H1 (cell line): ENCODE measurements at regions of chr4 and their contacts with region 1.

Region 1: GRCh38 chr4:78644744-78645330 is 93.3 kb downstream of the ANXA3 start:
- DNase-seq: no peak
- H3K4me3 ChIP-seq: no peak overlapping the region
- H3K27ac ChIP-seq: no peak overlapping the region
- H3K4me1 ChIP-seq: no peaks in the 10 kb centered on the region
- H3K27me3 ChIP-seq: no peaks in the 10 kb centered on the region
- CTCF ChIP-seq: peak; percentile 54 to 81 (median 74); a peak in 3 of 4 replicates
- EP300 ChIP-seq: no peak
- POLR2A ChIP-seq: no peak
- RAD21 ChIP-seq: peak; percentile 66 to 74

Region 2: DNA sequence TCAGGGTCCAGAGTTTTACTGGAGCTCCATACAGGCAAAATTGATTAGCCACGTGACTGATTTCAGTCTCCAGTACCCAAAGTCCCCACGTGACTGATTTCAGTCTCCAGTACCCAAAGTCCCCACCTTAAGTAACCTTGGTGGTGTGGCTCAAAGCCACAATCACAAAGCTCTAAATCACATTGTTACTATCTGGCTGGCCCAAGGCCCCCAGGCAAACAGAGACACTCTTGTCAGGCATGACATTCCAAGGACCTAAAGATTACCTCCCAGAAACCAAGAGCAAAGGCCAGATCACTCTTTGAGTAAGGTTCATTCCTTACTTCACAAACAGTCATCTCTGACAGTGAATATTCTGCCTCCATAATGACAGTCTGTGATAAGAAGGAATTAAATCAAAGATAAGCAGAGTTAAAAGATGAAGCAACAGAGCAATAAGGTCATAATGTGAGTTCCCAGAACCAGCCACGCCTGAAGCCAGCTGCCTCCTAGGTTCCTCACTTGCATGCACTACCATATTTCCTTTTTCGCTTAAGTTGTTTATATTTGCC is 14.8 kb before region 1 on chr4:
- CTCF ChIA-PET with region 1: interaction called, 38 read pairs
- POLR2A ChIA-PET with region 1: no interaction called
- DNase-seq: no peak
- H3K4me3 ChIP-seq: no peak overlapping the region
- H3K27ac ChIP-seq: no peak overlapping the region
- H3K4me1 ChIP-seq: no peaks in the 10 kb centered on the region
- H3K27me3 ChIP-seq: no peaks in the 10 kb centered on the region
- CTCF ChIP-seq: no peak
- EP300 ChIP-seq: no peak
- POLR2A ChIP-seq: no peak
- RAD21 ChIP-seq: no peak

Region 3: GRCh38 chr4:78659264-78659663 is 14.4 kb after region 1 on chr4:
- CTCF ChIA-PET with region 1: interaction called, 16 read pairs
- POLR2A ChIA-PET with region 1: no interaction called
- DNase-seq: no peak
- H3K4me3 ChIP-seq: no peak overlapping the region
- H3K27ac ChIP-seq: no peak overlapping the region
- H3K4me1 ChIP-seq: peaks cover under 1 to 11% (median 2%) of the 10 kb centered on the region in 4 experiments; a peak in 3 of 7 replicates
- H3K27me3 ChIP-seq: no peaks in the 10 kb centered on the region; a peak in 1 of 7 replicates
- CTCF ChIP-seq: no peak
- EP300 ChIP-seq: no peak
- POLR2A ChIP-seq: no peak
- RAD21 ChIP-seq: no peak

Region 4: DNA sequence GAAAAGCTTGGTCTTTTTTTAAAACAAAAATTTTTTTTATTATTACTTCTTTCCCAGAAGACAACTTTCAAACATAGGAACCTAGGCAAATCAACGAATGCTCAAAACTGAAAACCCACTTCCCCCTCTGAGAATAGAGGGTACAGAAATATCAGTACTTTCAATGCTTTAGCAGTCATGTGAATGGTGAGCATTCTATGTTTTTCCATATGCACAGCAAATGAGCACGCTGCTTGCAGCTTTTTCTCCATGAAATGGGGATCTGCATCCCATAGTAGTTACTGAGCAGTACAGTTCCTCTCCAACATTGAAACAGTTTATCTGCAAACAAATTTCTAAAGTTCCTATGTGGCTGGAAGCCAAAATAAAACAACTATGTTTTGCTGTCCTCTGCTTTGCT is 22.9 kb after region 1 on chr4:
- CTCF ChIA-PET with region 1: interaction called, 50 read pairs
- POLR2A ChIA-PET with region 1: no interaction called
- DNase-seq: no peak
- H3K4me3 ChIP-seq: no peak overlapping the region
- H3K27ac ChIP-seq: no peak overlapping the region
- H3K4me1 ChIP-seq: peaks cover 0 to 9% (median 2%) of the 10 kb centered on the region in 4 experiments; a peak in 1 of 7 replicates
- H3K27me3 ChIP-seq: no peaks in the 10 kb centered on the region
- CTCF ChIP-seq: no peak
- EP300 ChIP-seq: no peak
- POLR2A ChIP-seq: no peak
- RAD21 ChIP-seq: no peak

Region 5: GRCh38 chr4:78753091-78753490 is 108.3 kb after region 1 on chr4:
- CTCF ChIA-PET with region 1: interaction called, 10 read pairs
- POLR2A ChIA-PET with region 1: no interaction called
- DNase-seq: no peak
- H3K4me3 ChIP-seq: no peak overlapping the region
- H3K27ac ChIP-seq: no peak overlapping the region
- H3K4me1 ChIP-seq: no peaks in the 10 kb centered on the region
- H3K27me3 ChIP-seq: no peaks in the 10 kb centered on the region
- CTCF ChIP-seq: no peak
- EP300 ChIP-seq: no peak
- POLR2A ChIP-seq: no peak
- RAD21 ChIP-seq: no peak